ENCODE measurements at regions of chr2 and their contacts with region 1.

Region 1: DNA sequence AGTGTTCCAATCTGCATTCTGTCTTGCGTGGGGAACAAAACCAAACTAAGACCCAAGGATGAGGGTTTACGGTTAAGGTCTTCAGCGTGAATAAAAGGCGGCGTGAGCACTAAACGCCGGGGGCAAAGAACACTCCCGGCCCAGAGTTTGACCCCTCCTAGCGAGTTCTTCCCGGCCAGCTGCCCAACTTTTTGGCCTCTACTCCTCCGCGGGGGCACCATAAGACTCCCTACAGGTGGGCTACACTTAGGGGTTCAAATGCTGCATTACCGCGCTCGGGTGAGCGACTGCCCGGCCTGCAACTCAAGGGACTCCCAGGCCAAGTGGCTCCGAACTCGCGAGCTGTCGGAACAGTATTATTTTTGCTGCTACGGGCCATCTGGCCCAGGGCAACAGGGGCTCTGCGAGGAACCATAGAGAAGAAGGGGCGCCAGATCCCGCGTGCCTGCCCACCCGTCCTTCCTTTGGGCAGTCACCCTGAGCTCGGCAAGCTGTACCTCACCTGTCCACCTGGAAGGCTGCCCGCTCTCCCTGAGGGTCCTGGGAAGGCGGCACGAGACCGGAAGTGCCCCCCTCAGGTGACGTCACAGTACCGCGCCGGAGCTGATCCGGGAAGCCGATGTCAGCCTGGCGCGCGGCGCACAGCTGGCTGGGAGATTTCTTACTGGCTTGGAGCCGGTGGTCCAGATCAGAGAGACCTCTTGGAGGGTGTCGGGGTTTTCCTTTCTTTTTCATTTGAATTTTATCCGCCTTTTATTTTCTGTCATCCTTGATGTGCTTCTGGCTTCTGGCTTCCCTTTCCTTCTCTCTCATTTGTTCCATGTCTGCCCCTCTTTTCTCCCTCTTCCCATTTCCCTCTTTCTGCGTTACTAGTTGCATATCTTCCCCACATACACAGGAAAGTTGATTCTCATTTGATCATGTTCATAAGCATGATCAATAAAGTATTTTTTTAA is at the start of gene LDAH:
- DNase-seq: peak; percentile 91
- ATAC-seq: peak; percentile 91
- H3K4me3 ChIP-seq: peak within 1 kb of the TSS; percentile 79 to 90 (median 87)
- H3K27ac ChIP-seq: peak within 1 kb of the TSS; percentile 91
- H3K4me1 ChIP-seq: peaks cover 13% of the 10 kb centered on the region
- H3K27me3 ChIP-seq: no peaks in the 10 kb centered on the region; a peak in 1 of 5 replicates
- CTCF ChIP-seq: no peak
- EP300 ChIP-seq: peak in 1 of 2 experiments; percentile 62; a peak in 2 of 4 replicates
- POLR2A ChIP-seq: peak; percentile 93 to 95
- RAD21 ChIP-seq: peak; percentile 59; the same call in 1 of the 2 replicates
- total RNA-seq, gene LDAH: 46.2 and 66.4 TPM in 2 replicates

Region 2: GRCh38 chr2:20666304-20667150 is 156.3 kb before region 1 on chr2 and contains the start of gene GDF7:
- CTCF ChIA-PET with region 1: no interaction called
- POLR2A ChIA-PET with region 1: interaction called, 12 read pairs
- in situ Hi-C with region 1: no loop called
- intact Hi-C with region 1: loop called (anchors 2 kb)
- DNase-seq: peak; percentile 46
- ATAC-seq: peak; percentile 60
- H3K4me3 ChIP-seq: peak within 1 kb of the TSS; percentile 81 to 87 (median 87)
- H3K27ac ChIP-seq: peak within 1 kb of the TSS; percentile 65
- H3K4me1 ChIP-seq: peaks cover 49% of the 10 kb centered on the region
- H3K27me3 ChIP-seq: peaks cover 20 to 43% of the 10 kb centered on the region in 2 experiments; a peak in 4 of 5 replicates
- CTCF ChIP-seq: peak; percentile 71
- EP300 ChIP-seq: no peak
- POLR2A ChIP-seq: no peak
- RAD21 ChIP-seq: no peak
- total RNA-seq, gene GDF7: 10.2 and 15.0 TPM in 2 replicates

Region 3: DNA sequence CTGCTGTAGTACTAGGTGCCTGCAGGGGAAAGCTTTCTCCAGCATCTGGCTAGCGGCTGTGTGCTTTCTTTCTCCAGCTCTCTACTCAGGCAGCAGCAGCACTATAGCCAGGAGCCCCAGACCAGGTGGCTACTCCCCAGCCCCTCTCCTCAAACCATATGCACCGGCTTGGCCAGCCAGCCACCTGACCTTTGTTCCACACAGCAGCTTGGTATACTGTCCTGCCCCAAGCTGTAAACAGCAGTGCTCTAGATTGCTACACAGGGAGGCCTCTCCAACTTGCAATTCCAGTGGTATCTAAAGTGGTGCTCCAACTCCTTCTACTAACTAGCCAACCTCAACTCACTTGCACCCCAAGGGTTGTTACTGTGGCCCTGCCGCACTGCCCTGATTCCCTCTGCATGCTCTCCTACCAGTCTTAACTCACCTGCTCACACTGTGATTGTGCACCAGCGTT is 19.6 kb before region 1 on chr2:
- CTCF ChIA-PET with region 1: no interaction called
- POLR2A ChIA-PET with region 1: interaction called, 20 read pairs
- in situ Hi-C with region 1: no loop called
- intact Hi-C with region 1: no loop called
- DNase-seq: peak; percentile 45
- ATAC-seq: peak; percentile 99
- H3K4me3 ChIP-seq: peak overlapping the region in 1 of 3 experiments; percentile 22; a peak in 1 of 6 replicates
- H3K27ac ChIP-seq: peak overlapping the region; percentile 31
- H3K4me1 ChIP-seq: peaks cover 18% of the 10 kb centered on the region
- H3K27me3 ChIP-seq: no peaks in the 10 kb centered on the region
- CTCF ChIP-seq: no peak; the same call in 1 of the 2 replicates
- EP300 ChIP-seq: no peak
- POLR2A ChIP-seq: no peak
- RAD21 ChIP-seq: no peak

Region 4: GRCh38 chr2:20834331-20834730 is 11.5 kb after region 1 on chr2:
- CTCF ChIA-PET with region 1: no interaction called
- POLR2A ChIA-PET with region 1: interaction called, 11 read pairs
- in situ Hi-C with region 1: no loop called
- intact Hi-C with region 1: no loop called
- DNase-seq: no peak
- ATAC-seq: no peak
- H3K4me3 ChIP-seq: peak overlapping the region in 1 of 3 experiments; percentile 43; a peak in 1 of 6 replicates
- H3K27ac ChIP-seq: no peak overlapping the region
- H3K4me1 ChIP-seq: peaks cover 18% of the 10 kb centered on the region; the same call in 1 of the 2 replicates
- H3K27me3 ChIP-seq: peaks cover 0 to 4% of the 10 kb centered on the region in 2 experiments; a peak in 1 of 5 replicates
- CTCF ChIP-seq: no peak
- EP300 ChIP-seq: no peak
- POLR2A ChIP-seq: no peak
- RAD21 ChIP-seq: no peak